Posterior vena cava (tissue), 2 donors: ENCODE measurements at regions of chr14 and their contacts with region 1.

Region 1: DNA sequence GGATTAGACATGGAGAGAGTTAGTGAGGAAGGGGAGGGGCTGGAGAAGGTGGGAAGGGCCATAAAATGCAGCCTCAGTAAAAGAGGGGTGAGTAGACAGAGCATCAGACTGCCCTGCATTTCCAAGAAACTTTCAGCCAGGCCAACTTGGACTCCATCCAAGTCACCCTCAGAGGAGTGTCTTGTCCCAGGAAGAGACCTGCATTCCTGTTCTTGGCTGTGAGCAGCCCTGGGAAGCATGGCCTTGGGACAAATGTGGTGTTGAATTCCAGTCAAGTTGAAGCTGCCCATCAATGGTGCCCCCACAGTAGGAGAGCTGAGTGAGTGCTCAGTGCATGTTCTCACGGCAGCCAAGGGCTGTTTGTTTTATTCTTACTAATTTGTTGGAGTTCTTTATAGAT is 35.0 kb upstream of the TUNAR start:
- DNase-seq: no peak

Region 2: GRCh38 chr14:94805680-94806288 is 1035.9 kb before region 1 on chr14:
- intact Hi-C with region 1: loop called in 1 of 2 experiments (anchors 10 kb)
- DNase-seq: peak; percentile 53

Region 3: DNA sequence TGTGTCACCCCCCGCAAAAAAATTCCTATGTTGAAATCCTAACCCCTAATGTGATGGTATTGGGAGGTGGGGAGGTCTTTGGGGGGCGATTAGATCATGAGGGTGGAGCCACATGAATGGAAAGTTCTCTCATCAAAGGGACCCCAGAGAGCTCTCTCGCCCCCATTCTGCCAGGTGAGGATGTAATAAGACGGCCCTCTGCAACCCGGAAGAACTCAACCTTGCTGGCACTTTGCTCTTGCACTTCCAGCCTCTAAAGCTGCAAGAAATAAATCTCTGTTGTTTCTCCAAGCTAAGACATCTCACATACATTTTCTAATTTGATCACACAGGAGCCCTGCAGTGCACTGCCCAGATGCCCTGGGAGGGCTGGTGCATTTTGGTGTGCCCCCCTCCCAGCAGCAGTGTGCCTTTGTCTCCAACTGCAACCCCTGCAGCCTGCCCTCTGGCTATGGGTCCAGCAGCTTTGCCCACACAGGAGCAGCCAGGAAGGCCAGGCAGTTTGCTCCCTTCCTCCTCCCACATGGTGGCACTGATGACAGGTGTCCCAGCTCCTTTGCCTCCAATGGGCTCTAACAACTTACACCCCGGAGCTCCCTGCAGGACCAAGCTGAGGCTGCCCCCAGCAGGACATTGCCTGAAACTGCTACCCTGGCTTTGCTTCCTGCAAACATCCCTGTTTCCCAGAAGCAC is 256.8 kb after region 1 on chr14:
- intact Hi-C with region 1: no loop called
- DNase-seq: peak; percentile 74